Dorsolateral prefrontal cortex (tissue), 120 donors: ENCODE measurements at regions of chr2 and their contacts with region 1.

Region 1: DNA sequence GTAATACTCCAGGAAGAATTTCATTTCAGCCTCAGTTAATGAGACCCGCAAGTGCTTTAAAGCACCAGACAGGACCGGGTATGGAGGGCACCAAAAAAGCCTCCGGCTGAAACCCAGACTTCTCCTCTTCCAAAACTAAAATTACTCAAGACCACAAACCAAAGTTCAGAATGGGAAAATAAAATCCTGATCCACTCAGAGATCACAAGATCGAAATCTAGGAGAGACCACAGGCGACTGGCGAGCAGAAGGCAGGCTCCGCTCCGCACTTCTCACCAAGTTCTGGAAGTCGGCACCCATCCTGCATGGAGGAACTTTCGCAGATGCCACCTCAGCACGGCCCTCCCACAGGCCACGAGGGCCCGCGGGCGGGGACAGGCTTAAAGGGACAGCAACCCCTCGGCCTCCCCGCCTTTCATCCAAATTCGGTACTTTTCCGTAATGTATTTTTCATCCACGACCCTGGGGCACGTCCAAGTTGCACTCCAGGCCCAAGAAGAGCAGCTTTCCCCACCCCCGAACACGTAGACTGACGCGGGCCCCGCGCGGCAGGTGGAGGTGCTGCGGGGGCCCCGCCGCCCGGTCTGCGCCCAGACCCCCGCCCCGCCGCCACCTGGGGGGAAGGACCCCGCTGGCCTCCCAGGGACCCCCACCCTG is 43.7 kb downstream of the HDLBP start:
- DNase-seq: peak; percentile 70 to 89 (median 85)
- H3K4me3 ChIP-seq: peak overlapping the region; percentile 54 to 94 (median 80)
- H3K27ac ChIP-seq: peak overlapping the region in 53 of 59 donors; percentile 46 to 93 (median 81)
- H3K27me3 ChIP-seq: no peaks in the 10 kb centered on the region
- CTCF ChIP-seq: peak in 1 of 56 donors; percentile 29

Region 2: DNA sequence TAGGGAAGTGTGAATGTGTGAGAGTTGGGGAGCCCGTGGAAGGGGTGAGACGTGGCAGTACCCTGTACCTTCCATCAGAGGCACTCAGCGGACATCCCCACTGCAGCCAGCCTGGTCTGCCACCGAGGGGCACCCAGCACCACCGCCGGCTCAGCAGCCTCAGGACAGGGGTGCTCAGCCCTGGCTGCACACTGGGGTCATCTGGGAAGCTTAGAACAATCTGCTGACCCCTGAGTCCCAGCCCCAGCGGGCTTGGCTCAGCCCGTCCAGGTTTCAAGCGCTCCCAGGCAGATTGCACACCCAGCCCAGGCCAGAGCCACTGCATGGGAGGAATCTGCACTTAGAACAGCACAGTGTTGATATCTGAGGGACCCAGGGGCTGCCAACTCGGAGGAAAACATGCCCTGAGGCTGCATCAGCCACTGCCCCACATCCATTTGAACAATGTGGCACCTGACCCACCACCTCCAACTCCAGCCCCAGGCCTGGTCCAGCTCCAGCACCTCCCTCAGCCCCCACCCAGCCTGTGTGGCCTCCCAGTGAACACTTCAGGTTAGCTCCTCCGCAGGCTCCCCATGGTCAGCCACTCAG is 984.2 kb before region 1 on chr2:
- intact Hi-C with region 1: no loop called
- DNase-seq: no peak
- H3K4me3 ChIP-seq: peak overlapping the region in 4 of 59 donors; percentile 3 to 17 (median 10)
- H3K27ac ChIP-seq: peak overlapping the region in 17 of 59 donors; percentile 9 to 82 (median 51)
- H3K27me3 ChIP-seq: no peaks in the 10 kb centered on the region
- CTCF ChIP-seq: peak in 8 of 56 donors; percentile 7 to 33 (median 22)

Region 3: DNA sequence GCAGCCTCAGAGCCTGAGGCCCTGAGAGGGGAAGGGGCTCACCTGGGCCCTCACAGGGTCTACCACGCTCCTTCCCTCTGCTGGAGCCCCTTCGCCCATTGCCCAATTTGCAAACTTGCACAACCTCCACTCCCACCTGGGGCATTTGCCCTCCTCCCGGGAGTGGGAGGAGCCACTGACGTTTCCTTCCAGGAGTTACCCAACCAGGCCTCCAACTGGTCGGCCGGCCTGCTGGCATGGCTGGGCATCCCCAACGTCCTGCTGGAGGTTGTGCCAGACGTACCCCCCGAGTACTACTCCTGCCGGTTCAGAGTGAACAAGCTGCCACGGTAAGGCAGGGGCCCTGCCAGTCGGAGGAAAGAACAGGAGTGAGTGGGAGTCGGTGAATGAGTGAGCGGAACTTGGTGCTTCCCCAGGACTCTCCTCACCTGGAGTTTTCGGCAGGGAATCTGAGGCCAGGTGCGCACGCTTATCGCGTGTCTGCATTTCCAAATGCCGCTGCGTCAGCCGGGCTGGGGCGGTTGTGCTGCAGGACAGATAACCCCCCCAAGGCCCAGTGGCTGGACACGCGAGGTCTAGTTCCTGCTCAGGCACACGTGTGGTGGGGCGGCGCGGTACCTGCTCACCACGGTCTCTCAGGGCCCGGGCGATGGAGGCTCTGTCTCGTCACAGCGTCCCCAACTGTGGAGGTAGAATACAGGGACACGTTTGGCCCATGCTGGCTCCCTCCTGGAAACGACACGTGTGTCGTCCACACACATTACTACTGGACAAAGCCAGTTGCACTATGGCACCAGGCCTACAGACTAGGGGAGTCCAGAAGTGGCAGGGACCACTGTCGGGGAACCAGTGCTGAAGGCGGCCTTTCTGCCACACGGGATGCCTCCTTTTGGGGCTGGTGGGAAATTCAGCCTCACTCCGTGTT is 71.6 kb before region 1 on chr2:
- intact Hi-C with region 1: no loop called
- DNase-seq: no peak
- H3K4me3 ChIP-seq: no peak overlapping the region
- H3K27ac ChIP-seq: no peak overlapping the region
- H3K27me3 ChIP-seq: no peaks in the 10 kb centered on the region
- CTCF ChIP-seq: no peak

Region 4: DNA sequence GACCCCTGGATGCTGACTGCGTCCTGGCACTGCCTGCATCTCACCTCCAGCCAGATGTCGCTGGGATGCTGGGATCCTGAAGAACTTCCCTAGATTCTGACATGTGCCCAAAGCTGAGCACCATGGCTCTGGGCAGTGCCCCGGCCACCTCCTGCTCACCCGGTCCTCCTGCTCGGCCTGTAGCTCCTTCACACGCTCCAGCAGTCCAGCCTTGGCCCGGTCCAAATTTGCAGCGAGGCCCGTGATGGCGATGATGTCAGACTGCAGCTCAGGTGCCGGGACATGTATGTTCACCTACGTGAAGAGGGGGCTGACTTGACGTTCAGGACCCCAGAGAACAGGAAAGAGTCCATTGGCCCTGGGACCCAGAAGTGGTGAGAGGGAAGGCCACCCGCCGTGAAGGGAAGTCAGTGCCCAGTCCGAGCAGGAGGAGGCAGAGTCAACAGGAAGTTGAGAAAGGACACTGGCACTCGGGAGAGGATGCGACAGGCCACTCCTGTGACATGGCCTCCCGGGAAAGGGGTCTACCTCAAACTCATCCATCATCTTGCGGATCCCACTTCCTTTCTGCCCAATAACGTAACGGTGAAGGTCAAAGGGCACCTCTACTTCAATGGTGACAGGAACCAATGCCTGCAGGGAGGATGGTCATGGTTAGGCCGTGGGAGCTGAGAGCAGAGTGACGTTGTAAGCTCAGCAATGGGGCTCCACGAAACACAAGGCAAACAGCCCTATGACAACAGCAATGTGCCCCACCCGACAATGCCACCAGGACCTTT is 36.6 kb before region 1 on chr2:
- intact Hi-C with region 1: loop called in 1 of 2 experiments (anchors 5 kb)
- DNase-seq: peak in 2 of 10 donors; percentile 33 to 34
- H3K4me3 ChIP-seq: no peak overlapping the region
- H3K27ac ChIP-seq: peak overlapping the region in 2 of 59 donors; percentile 48
- H3K27me3 ChIP-seq: no peaks in the 10 kb centered on the region
- CTCF ChIP-seq: no peak